ENCODE measurements at regions of chr9 and their contacts with region 1.

Region 1: GRCh38 chr9:38401994-38402393 is 9.5 kb downstream of the ALDH1B1 start:
- DNase-seq: no peak
- ATAC-seq: no peak
- H3K4me3 ChIP-seq: no peak overlapping the region
- H3K27ac ChIP-seq: no peak overlapping the region
- H3K4me1 ChIP-seq: no peaks in the 10 kb centered on the region
- CTCF ChIP-seq: no peak
- EP300 ChIP-seq: no peak
- POLR2A ChIP-seq: no peak
- RAD21 ChIP-seq: no peak

Region 2: DNA sequence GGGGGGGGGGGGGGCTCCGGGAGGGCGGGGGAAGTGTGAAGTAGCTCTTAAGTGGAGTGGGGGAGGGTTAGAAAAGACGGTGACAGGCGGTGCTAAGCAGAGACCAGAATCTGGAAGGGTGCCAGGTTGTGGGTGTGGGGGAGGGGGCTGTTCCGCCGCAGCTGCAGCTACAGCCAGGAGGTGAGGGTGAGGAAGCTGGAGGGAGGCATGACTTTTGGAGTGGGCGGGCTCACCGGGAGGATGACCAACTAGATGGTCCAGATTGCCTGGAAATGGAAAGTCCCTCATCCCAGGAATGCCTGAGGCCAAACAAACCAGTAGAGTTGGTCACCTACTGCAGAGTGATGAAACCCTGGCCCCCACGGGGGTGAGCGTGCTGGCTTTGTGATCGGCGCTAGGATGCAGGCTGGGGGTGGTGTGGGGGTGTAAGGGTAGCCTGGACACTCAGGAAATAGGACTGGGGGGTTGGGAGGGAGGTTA is 174.9 kb before region 1 on chr9:
- CTCF ChIA-PET with region 1: no interaction called
- POLR2A ChIA-PET with region 1: no interaction called
- DNase-seq: peak; percentile 80 to 92
- ATAC-seq: peak; percentile 93 to 97
- H3K4me3 ChIP-seq: peak overlapping the region; percentile 24; the same call in 1 of the 3 replicates
- H3K27ac ChIP-seq: peak overlapping the region; percentile 69 to 87
- H3K4me1 ChIP-seq: peaks cover 23% of the 10 kb centered on the region
- CTCF ChIP-seq: no peak
- EP300 ChIP-seq: peak in 1 of 2 experiments; percentile 79; a peak in 1 of 5 replicates
- POLR2A ChIP-seq: no peak
- RAD21 ChIP-seq: peak in 1 of 2 experiments; percentile 15; a peak in 1 of 5 replicates

Region 3: DNA sequence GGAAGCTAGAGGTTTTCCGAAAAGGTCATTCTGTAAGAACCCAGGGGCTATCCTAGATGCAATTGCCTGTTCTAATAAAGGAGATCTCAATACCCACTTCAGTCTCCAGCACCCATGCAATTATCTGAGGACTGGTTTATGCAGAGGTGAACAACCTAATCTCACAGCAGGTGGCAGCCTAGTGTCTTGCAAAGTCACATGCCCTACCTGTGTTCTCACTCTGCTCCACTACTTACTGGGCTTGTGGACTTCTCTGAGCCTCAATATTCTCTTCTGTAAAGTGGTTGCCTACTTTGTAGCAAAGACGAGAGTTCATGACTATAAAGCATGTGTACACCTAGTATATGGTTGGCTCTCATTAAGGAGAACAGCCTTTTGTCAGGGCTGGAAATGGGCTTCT is 30.5 kb before region 1 on chr9:
- CTCF ChIA-PET with region 1: interaction called, 35 read pairs
- POLR2A ChIA-PET with region 1: no interaction called
- DNase-seq: peak; percentile 64 to 71
- ATAC-seq: peak; percentile 94
- H3K4me3 ChIP-seq: no peak overlapping the region
- H3K27ac ChIP-seq: no peak overlapping the region
- H3K4me1 ChIP-seq: no peaks in the 10 kb centered on the region
- CTCF ChIP-seq: peak; percentile 65
- EP300 ChIP-seq: no peak
- POLR2A ChIP-seq: no peak
- RAD21 ChIP-seq: peak; percentile 77 to 81

Region 4: DNA sequence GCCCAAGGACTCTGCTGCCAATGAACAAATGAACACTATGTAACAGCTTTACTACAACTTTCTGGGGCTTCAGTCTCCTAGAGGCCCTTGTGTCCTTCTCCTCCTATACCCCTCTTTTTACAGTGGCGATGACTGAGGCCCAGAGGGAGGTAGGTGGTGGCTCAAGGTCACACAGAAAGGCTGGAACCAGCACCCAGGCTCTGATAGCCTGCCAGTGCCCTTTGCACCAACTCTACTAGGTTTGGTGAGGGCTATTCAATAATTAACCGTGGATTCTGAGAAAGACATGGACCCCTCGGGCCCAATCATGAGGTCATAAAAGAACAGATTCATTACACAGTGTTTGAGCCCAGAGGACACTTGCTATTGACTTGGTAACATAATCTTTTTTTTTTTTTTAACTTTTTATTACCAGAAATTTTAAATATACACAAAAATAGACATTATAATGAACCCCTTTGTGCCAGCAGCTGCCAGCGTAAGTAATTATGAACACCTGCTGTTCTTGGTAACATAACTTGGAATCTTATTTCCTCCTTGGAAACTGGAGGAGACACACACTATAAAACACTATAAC is 15.6 kb before region 1 on chr9:
- CTCF ChIA-PET with region 1: interaction called, 18 read pairs
- POLR2A ChIA-PET with region 1: no interaction called
- DNase-seq: no peak
- ATAC-seq: no peak
- H3K4me3 ChIP-seq: no peak overlapping the region
- H3K27ac ChIP-seq: no peak overlapping the region
- H3K4me1 ChIP-seq: peaks cover 12% of the 10 kb centered on the region
- CTCF ChIP-seq: no peak
- EP300 ChIP-seq: no peak
- POLR2A ChIP-seq: no peak
- RAD21 ChIP-seq: no peak

Region 5: DNA sequence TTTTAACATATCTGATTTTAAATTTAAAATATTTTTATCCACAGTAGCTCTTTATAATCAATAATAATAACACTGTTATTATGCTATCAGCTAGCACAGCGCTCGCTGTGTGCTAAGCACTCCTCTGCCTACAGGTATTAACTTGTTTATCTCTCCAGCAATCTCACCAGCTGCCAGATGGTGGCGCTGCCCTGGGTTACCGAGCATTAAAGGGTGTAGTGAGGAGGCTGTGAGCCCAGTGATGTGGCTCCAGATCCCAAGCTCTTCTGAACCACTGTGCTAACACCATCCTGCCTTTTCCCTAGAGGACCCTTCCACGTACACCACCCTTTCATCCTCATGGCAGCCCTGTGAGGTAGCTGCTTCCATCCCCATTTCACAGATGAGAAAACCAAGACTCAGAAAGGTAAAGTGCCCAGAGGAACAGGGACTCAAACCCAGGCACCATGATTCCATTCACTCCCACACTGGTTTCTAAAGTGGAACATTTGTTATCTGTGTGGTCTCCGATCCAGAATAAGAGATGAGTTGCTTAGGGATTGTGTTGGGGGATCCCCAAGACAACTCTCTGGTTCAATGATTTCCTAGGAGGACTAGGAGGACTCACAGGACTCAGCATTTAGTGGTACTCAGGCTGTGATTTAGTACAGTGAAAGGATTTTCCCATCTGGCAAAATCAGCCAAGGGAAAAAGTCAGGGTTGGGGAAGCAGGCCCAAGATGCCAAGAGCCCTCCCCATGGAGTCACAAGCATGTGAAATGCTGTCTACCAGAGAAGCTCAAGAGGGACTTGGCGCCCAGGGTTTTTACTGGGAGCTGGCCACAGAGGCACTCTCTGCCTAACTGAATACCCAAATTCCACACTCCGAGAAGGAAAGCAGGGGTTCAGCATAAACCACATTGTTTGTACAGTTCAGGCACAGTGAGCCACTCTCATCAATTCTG is 15.3 kb after region 1 on chr9:
- CTCF ChIA-PET with region 1: interaction called, 17 read pairs
- POLR2A ChIA-PET with region 1: no interaction called
- DNase-seq: peak; percentile 38 to 48
- ATAC-seq: peak; percentile 50 to 87; a peak in 4 of 6 replicates
- H3K4me3 ChIP-seq: no peak overlapping the region
- H3K27ac ChIP-seq: no peak overlapping the region
- H3K4me1 ChIP-seq: no peaks in the 10 kb centered on the region
- CTCF ChIP-seq: peak; percentile 59
- EP300 ChIP-seq: no peak
- POLR2A ChIP-seq: no peak
- RAD21 ChIP-seq: peak; percentile 15 to 42; a peak in 2 of 5 replicates

Region 6: GRCh38 chr9:38432922-38433510 is 31.0 kb after region 1 on chr9:
- CTCF ChIA-PET with region 1: interaction called, 11 read pairs
- POLR2A ChIA-PET with region 1: no interaction called
- DNase-seq: peak; percentile 34 to 60
- ATAC-seq: peak; percentile 62 to 66; a peak in 3 of 6 replicates
- H3K4me3 ChIP-seq: no peak overlapping the region
- H3K27ac ChIP-seq: no peak overlapping the region
- H3K4me1 ChIP-seq: peaks cover 21% of the 10 kb centered on the region
- CTCF ChIP-seq: peak; percentile 59
- EP300 ChIP-seq: no peak
- POLR2A ChIP-seq: no peak
- RAD21 ChIP-seq: peak; percentile 54 to 55